A549 (cell line): ENCODE measurements at regions of chr7 and their contacts with region 1.

Region 1: GRCh38 chr7:12686894-12687717 is at the start of gene ARL4A:
- DNase-seq: peak; percentile 98
- ATAC-seq: peak; percentile 84 to 90
- H3K4me3 ChIP-seq: peak within 1 kb of the TSS; percentile 92
- H3K27ac ChIP-seq: peak within 1 kb of the TSS; percentile 98 to 99
- H3K4me1 ChIP-seq: peaks cover 42% of the 10 kb centered on the region; the same call in 2 of the 3 replicates
- CTCF ChIP-seq: peak; percentile 46
- EP300 ChIP-seq: no peak
- POLR2A ChIP-seq: peak; percentile 87
- RAD21 ChIP-seq: peak; percentile 79 to 94
- polyA plus RNA-seq, gene ARL4A: 58.9 and 76.1 TPM in 2 replicates

Region 2: DNA sequence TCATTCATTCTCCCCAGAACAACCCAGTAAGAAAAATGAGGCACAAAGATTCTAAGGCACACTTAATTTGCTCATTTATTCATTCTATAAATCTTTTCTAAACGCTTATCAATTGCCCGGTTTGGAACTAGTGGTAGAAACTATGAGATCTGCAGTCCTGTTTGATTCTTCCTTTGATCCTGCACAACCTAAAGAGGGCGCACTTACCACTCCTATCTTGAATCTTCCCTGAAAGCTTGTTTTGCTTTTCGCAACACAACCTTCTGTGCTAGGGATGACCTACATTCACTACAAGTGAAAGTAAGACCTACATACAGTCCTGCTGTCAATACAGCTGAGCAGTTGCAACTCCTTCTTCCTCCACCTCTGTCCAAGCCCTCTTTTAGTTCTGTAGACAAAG is 12.3 kb before region 1 on chr7:
- CTCF ChIA-PET with region 1: interaction called, 19 read pairs
- POLR2A ChIA-PET with region 1: interaction called, 3 read pairs
- DNase-seq: peak in 1 of 2 experiments; percentile 51
- ATAC-seq: peak; percentile 43 to 50; a peak in 4 of 6 replicates
- H3K4me3 ChIP-seq: no peak overlapping the region
- H3K27ac ChIP-seq: no peak overlapping the region
- H3K4me1 ChIP-seq: no peaks in the 10 kb centered on the region
- CTCF ChIP-seq: no peak
- EP300 ChIP-seq: no peak
- POLR2A ChIP-seq: no peak
- RAD21 ChIP-seq: peak in 1 of 2 experiments; percentile 33; a peak in 2 of 5 replicates

Region 3: DNA sequence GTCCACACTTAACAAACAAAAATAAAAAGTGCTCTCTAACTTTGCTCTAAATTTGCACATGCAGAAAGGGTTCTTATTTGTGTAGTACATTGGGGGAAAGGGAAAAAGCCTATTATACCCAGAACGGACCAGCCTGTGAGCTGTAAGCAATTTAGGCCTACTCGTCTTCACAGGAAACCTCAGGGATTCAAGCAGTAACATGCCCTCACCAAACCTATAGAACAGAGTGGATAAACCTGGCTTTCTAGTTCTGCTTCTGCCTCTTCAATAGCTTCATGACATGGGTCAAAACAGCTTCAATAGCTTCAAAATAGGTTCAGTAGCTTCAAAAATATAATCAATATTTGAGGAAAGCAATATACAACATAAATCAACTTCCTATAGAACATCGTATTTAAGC is 164.0 kb after region 1 on chr7:
- CTCF ChIA-PET with region 1: interaction called, 13 read pairs
- POLR2A ChIA-PET with region 1: no interaction called
- DNase-seq: no peak
- ATAC-seq: no peak
- H3K4me3 ChIP-seq: no peak overlapping the region
- H3K27ac ChIP-seq: peak overlapping the region in 1 of 2 experiments; percentile 15; a peak in 1 of 6 replicates
- H3K4me1 ChIP-seq: peaks cover 9% of the 10 kb centered on the region; the same call in 2 of the 3 replicates
- CTCF ChIP-seq: no peak
- EP300 ChIP-seq: no peak
- POLR2A ChIP-seq: no peak
- RAD21 ChIP-seq: no peak

Region 4: GRCh38 chr7:13032576-13032975 is 345.5 kb after region 1 on chr7:
- CTCF ChIA-PET with region 1: interaction called, 16 read pairs
- POLR2A ChIA-PET with region 1: interaction called, 3 read pairs
- DNase-seq: peak in 1 of 2 experiments; percentile 43
- ATAC-seq: peak; percentile 70 to 80; a peak in 5 of 6 replicates
- H3K4me3 ChIP-seq: no peak overlapping the region
- H3K27ac ChIP-seq: peak overlapping the region; percentile 56 to 66
- H3K4me1 ChIP-seq: peaks cover 39% of the 10 kb centered on the region
- CTCF ChIP-seq: no peak
- EP300 ChIP-seq: no peak
- POLR2A ChIP-seq: no peak
- RAD21 ChIP-seq: peak in 1 of 2 experiments; percentile 25; a peak in 2 of 5 replicates

Region 5: DNA sequence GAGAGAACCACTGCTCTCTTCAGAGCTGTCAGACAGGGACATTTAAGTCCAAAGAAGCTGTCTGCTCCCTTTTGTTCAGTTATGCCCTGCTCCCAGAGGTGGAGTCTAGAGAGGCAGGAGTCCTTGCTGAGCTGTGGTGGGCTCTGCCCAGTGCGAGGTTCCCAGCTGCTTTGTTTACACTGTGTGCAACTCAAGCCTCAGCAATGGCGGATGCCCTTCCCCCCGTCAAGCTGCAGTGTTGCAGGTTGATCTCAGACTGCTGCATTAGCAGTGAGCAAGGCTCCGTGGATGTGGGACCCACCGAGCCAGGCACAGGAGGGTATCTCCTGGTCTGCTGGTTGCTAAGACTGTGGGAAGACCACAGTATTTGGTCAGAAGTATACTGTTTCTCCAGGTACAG is 439.2 kb after region 1 on chr7:
- CTCF ChIA-PET with region 1: interaction called, 10 read pairs
- POLR2A ChIA-PET with region 1: no interaction called
- DNase-seq: no peak
- ATAC-seq: no peak
- H3K4me3 ChIP-seq: no peak overlapping the region
- H3K27ac ChIP-seq: no peak overlapping the region
- H3K4me1 ChIP-seq: no peaks in the 10 kb centered on the region
- CTCF ChIP-seq: no peak
- EP300 ChIP-seq: no peak
- POLR2A ChIP-seq: no peak
- RAD21 ChIP-seq: no peak

Region 6: GRCh38 chr7:13262929-13263530 is 575.9 kb after region 1 on chr7:
- CTCF ChIA-PET with region 1: interaction called, 122 read pairs
- POLR2A ChIA-PET with region 1: interaction called, 12 read pairs
- DNase-seq: peak; percentile 13 to 57
- ATAC-seq: peak; percentile 64 to 83; a peak in 4 of 6 replicates
- H3K4me3 ChIP-seq: no peak overlapping the region
- H3K27ac ChIP-seq: no peak overlapping the region
- H3K4me1 ChIP-seq: no peaks in the 10 kb centered on the region
- CTCF ChIP-seq: peak; percentile 94
- EP300 ChIP-seq: no peak
- POLR2A ChIP-seq: no peak
- RAD21 ChIP-seq: peak; percentile 96 to 97